ENCODE measurements at regions of chr11 and their contacts with region 1.

Region 1: GRCh38 chr11:124622531-124623451 is at the start of gene TBRG1:
- DNase-seq: peak; percentile 71
- ATAC-seq: peak; percentile 97
- H3K4me3 Mint-ChIP-seq: peak within 1 kb of the TSS; percentile 94
- H3K27ac Mint-ChIP-seq: peak within 1 kb of the TSS; percentile 91
- H3K4me1 Mint-ChIP-seq: peaks cover 27% of the 10 kb centered on the region
- H3K27me3 Mint-ChIP-seq: peaks cover 22% of the 10 kb centered on the region
- CTCF ChIP-seq: no peak
- total RNA-seq, gene TBRG1: 43.7 and 54.6 TPM in 2 replicates

Region 2: DNA sequence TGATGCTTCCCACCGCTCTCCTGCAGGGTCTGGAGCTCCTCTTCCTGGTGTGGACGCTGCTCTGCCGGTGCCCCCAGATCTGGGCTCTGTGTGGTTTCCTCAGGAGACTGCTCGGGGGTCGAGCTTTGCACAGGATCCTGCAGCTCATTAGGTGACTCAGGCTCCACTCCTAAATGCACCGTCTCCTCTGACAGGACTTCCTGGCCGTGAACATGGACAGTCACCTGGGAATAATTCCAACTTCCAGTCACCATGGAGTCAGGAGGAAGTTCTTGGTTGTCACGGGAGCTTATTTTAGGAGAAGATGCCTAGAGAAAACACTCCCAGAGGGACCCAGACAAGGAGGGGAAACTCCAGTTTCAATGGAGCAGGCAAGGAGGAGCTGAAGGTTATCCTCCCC is 893.2 kb before region 1 on chr11:
- CTCF ChIA-PET with region 1: no interaction called
- POLR2A ChIA-PET with region 1: no interaction called
- intact Hi-C with region 1: loop called (anchors 10 kb)
- DNase-seq: no peak
- ATAC-seq: no peak
- H3K4me3 Mint-ChIP-seq: no peak overlapping the region
- H3K27ac Mint-ChIP-seq: no peak overlapping the region
- H3K4me1 Mint-ChIP-seq: no peaks in the 10 kb centered on the region
- H3K27me3 Mint-ChIP-seq: no peaks in the 10 kb centered on the region
- CTCF ChIP-seq: no peak

Region 3: DNA sequence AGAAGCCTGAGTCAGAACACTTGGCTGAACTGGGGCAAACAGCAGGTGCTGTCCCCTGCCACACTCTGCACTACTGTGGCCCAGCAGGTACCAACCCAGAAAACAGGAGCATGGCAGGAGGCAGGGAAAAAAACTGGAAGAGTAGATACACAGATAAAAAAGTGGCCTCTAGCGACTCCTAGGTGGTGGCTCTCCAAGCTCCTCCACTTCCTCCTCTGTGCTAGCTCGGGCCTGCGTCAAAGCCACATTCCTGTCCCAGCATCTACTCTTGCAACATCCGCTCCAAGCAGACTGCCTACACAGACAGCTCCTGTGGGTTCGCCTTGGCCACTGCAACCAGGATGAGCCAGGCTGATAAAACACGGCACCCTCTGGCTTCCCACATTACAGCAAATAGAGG is 86.3 kb before region 1 on chr11:
- CTCF ChIA-PET with region 1: no interaction called
- POLR2A ChIA-PET with region 1: no interaction called
- intact Hi-C with region 1: no loop called
- DNase-seq: no peak
- ATAC-seq: no peak
- H3K4me3 Mint-ChIP-seq: no peak overlapping the region
- H3K27ac Mint-ChIP-seq: no peak overlapping the region
- H3K4me1 Mint-ChIP-seq: no peaks in the 10 kb centered on the region
- H3K27me3 Mint-ChIP-seq: peaks cover 27% of the 10 kb centered on the region
- CTCF ChIP-seq: no peak

Region 4: GRCh38 chr11:124682443-124682842 is 59.7 kb after region 1 on chr11:
- CTCF ChIA-PET with region 1: no interaction called
- POLR2A ChIA-PET with region 1: no interaction called
- intact Hi-C with region 1: no loop called
- DNase-seq: no peak
- ATAC-seq: no peak
- H3K4me3 Mint-ChIP-seq: no peak overlapping the region
- H3K27ac Mint-ChIP-seq: no peak overlapping the region
- H3K4me1 Mint-ChIP-seq: no peaks in the 10 kb centered on the region
- H3K27me3 Mint-ChIP-seq: no peaks in the 10 kb centered on the region
- CTCF ChIP-seq: no peak

Region 5: DNA sequence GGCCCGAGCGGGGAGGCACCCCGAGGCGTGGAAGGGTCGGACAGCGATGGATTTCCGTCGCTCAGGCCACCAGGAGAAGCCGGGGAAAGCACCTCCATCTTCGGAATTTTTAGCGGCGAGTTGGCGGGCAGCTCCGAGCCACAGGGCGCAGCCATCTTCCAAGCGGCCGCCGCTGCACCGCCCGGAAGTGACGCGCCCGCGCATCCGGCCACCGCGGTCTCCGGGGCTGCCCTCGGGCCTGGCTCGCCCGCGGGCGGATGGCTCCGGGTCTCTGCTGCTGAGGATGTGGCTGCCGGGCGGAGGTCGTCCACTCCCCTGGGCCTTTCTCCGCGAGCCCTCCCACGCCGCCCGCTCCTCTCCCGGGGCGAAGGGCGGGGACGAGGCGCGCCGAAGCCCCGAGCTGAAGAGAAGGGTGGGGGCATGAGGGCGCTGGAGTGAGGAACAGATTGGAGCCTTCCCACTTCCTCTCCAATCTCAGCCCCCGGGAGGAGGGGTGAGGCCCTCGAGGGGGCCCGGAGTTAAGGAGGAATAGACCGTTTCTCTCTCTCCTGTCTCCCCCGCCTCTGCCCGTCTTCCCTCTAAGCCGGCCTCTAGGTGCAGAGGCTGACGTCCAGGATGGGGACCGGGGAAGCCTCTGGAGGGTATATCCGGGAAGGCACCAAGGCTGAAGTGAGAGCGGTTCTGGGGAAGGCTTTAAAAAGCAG is 177.6 kb after region 1 on chr11 and contains the start of gene MSANTD2:
- CTCF ChIA-PET with region 1: no interaction called
- POLR2A ChIA-PET with region 1: interaction called, 13 read pairs
- intact Hi-C with region 1: loop called (anchors 1 kb)
- DNase-seq: peak; percentile 85
- ATAC-seq: peak; percentile 84
- H3K4me3 Mint-ChIP-seq: peak within 1 kb of the TSS; percentile 92
- H3K27ac Mint-ChIP-seq: peak within 1 kb of the TSS; percentile 92
- H3K4me1 Mint-ChIP-seq: peaks cover 26% of the 10 kb centered on the region
- H3K27me3 Mint-ChIP-seq: no peaks in the 10 kb centered on the region
- CTCF ChIP-seq: no peak
- total RNA-seq, gene MSANTD2: 17.7 and 21.0 TPM in 2 replicates

Measured in activated B cell treated with CpG ODN at 0.5 μM for 24 hours (primary cell).